ENCODE measurements at regions of chr9 and their contacts with region 1.

Region 1: DNA sequence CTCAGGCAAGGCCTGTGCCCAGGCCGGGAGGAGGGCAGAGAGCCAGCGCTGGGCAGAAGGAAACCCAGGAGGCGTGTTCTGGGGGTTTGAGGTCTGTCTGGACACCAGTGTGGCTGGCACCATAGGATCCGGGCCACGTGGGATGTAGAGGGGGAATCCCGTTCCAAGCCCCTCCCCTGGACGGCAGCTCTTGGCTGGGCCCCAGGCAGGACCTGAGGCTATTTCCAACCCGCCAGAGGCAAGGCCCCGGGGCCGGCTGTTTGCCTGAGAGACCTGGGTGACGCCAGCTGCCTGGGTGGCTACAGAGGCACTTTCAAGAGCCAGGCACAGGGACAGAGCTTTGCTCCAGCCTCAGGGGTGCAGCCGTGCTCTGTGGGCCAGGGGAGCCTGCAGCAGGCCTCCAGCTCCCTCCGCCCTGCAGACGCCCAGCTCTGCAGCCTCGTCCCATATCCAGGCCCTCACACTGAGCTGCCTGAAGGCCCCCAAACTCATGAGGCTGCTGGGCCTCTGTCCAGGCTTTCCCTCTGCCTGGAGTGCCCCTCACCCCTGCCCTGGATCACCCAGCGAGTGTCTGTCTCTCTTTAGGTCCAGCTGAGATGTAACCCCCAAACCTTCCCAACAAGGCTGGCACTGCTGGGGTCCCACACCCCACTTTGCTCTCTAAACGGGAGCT is 56.6 kb upstream of the EGFL7 start:
- DNase-seq: no peak
- ATAC-seq: peak; percentile 7; the same call in 1 of the 3 replicates
- H3K4me3 ChIP-seq: no peak overlapping the region
- H3K27ac ChIP-seq: no peak overlapping the region
- H3K4me1 ChIP-seq: peaks cover 16% of the 10 kb centered on the region; the same call in 1 of the 2 replicates
- H3K27me3 ChIP-seq: peaks cover 34 to 83% of the 10 kb centered on the region in 2 experiments
- CTCF ChIP-seq: no peak
- EP300 ChIP-seq: no peak
- POLR2A ChIP-seq: no peak
- RAD21 ChIP-seq: no peak

Region 2: DNA sequence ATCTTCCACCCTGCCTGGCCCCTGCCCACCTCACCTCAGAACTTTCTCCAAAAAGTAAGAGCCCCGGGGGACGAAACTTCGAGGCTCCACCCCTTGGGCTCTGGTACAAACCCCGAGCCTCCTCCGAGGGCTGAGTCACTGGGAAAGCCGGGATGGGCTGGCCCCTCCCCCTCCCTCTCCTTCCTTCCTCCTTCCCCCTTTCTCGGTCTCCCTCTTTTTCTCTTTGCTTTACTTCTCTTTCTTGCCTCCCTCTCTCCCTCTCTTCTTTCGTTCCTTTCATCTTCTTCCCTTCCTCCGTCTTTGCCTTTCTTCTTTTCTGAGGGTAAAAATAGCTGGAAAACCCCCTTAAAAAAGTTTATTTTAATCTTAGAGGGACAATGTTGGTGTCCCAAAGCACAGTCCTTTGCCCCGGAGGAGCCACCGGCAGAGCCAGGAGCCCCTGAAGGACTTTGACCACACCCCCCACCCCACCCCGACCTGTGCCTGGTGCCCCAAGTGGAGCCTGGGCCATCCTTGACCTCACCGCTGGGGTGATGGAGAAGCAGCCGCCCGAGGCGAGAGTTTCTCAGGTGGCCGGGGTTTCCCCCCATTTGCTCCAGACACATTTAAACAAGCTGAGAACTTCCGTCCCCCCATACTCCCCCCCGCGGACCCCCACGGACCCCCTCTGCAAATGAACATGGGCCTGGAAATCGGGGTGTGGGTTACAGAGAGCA is 54.6 kb before region 1 on chr9:
- CTCF ChIA-PET with region 1: no interaction called
- POLR2A ChIA-PET with region 1: no interaction called
- in situ Hi-C with region 1: loop called (anchors 5 kb)
- intact Hi-C with region 1: no loop called
- DNase-seq: no peak
- ATAC-seq: no peak
- H3K4me3 ChIP-seq: no peak overlapping the region
- H3K27ac ChIP-seq: no peak overlapping the region
- H3K4me1 ChIP-seq: peaks cover 21% of the 10 kb centered on the region
- H3K27me3 ChIP-seq: peaks cover 17 to 49% of the 10 kb centered on the region in 2 experiments
- CTCF ChIP-seq: no peak
- EP300 ChIP-seq: no peak
- POLR2A ChIP-seq: no peak
- RAD21 ChIP-seq: no peak

Measured in HepG2 (cell line).